PC-3 (cell line): ENCODE measurements at regions of chr4 and their contacts with region 1.

Region 1: DNA sequence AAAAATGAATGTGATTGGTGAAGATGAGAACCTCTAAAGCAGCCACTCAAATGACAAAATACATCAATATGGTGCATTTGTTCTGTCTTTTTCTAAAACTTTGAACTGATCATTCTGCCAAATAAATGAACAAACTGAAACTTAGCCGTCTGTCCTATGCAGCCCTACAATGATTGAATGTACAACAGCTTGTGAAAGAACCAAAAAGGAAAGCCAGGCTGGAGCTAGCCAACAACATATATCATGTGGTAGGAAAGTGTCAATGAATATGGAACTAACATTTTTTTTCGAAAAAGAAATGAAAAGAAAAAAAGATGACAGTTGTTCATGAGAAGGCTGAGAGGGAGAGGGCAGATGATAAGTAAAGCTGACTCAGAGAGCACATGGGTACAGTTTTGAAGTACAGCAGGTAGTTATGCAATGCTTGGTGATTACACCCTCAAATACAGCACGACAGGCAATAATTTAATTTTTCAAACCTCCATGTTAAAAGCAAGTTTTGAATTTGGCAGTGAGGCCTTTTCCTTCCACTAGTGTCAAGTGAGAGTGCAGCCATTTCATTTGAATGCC is 21.2 kb upstream of the SLC7A11 start:
- DNase-seq: no peak
- ATAC-seq: no peak
- H3K4me3 ChIP-seq: no peak overlapping the region
- H3K27ac ChIP-seq: no peak overlapping the region
- H3K4me1 ChIP-seq: peaks cover 27% of the 10 kb centered on the region
- H3K27me3 ChIP-seq: no peaks in the 10 kb centered on the region
- CTCF ChIP-seq: no peak

Region 2: GRCh38 chr4:138249132-138249531 is 14.2 kb before region 1 on chr4:
- CTCF ChIA-PET with region 1: no interaction called
- POLR2A ChIA-PET with region 1: no interaction called
- intact Hi-C with region 1: no loop called
- DNase-seq: no peak
- ATAC-seq: no peak
- H3K4me3 ChIP-seq: no peak overlapping the region
- H3K27ac ChIP-seq: no peak overlapping the region
- H3K4me1 ChIP-seq: peaks cover 8% of the 10 kb centered on the region
- H3K27me3 ChIP-seq: no peaks in the 10 kb centered on the region
- CTCF ChIP-seq: no peak

Region 3: DNA sequence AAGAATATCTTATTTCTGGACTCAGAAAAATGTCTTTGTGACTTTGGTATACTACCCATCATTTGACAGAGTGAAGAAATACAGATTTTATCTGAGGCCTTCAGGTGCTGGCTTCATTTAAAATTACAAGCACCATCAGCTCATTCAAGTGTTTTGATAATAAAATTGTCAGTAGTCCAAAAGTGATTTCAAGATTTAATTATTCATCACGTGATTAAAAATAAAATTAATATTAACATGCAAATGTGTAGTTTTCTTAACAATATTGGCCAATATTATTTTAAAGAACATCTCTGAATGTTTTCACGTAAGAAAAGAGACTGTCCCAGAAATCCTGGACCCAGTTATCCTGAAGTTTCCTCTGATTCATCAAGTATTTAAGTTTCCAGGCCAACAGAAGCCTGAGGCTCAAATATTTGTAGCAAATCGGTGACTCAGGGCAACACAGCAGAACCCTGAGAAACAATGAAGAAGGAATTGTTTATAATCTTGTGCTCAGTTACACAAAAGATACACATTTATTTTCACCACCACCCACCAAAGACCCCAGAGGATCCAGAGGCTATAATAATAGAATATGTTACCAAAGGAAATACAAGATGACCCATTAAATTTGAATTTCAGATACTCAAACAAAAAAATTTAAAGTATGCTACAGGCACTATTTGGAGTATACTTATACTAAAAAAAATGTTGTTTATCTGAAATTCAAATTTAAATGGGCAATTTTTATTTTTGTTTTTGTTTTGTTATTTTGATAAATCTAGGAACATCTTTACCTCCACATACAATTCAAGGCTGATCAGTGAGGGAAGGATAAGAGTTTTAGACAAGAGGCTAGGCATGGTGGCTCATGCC is 12.7 kb after region 1 on chr4:
- CTCF ChIA-PET with region 1: no interaction called
- POLR2A ChIA-PET with region 1: no interaction called
- intact Hi-C with region 1: loop called (anchors 2 kb)
- DNase-seq: peak; percentile 81
- ATAC-seq: peak; percentile 76
- H3K4me3 ChIP-seq: no peak overlapping the region
- H3K27ac ChIP-seq: peak overlapping the region; percentile 72
- H3K4me1 ChIP-seq: peaks cover 42% of the 10 kb centered on the region
- H3K27me3 ChIP-seq: no peaks in the 10 kb centered on the region
- CTCF ChIP-seq: no peak

Region 4: GRCh38 chr4:138401334-138401733 is 138.0 kb after region 1 on chr4:
- CTCF ChIA-PET with region 1: no interaction called
- POLR2A ChIA-PET with region 1: no interaction called
- intact Hi-C with region 1: no loop called
- DNase-seq: no peak
- ATAC-seq: no peak
- H3K4me3 ChIP-seq: no peak overlapping the region
- H3K27ac ChIP-seq: no peak overlapping the region
- H3K4me1 ChIP-seq: peaks cover 15% of the 10 kb centered on the region
- H3K27me3 ChIP-seq: no peaks in the 10 kb centered on the region
- CTCF ChIP-seq: no peak